H1 (cell line): ENCODE measurements at regions of chr4 and their contacts with region 1.

Region 1: DNA sequence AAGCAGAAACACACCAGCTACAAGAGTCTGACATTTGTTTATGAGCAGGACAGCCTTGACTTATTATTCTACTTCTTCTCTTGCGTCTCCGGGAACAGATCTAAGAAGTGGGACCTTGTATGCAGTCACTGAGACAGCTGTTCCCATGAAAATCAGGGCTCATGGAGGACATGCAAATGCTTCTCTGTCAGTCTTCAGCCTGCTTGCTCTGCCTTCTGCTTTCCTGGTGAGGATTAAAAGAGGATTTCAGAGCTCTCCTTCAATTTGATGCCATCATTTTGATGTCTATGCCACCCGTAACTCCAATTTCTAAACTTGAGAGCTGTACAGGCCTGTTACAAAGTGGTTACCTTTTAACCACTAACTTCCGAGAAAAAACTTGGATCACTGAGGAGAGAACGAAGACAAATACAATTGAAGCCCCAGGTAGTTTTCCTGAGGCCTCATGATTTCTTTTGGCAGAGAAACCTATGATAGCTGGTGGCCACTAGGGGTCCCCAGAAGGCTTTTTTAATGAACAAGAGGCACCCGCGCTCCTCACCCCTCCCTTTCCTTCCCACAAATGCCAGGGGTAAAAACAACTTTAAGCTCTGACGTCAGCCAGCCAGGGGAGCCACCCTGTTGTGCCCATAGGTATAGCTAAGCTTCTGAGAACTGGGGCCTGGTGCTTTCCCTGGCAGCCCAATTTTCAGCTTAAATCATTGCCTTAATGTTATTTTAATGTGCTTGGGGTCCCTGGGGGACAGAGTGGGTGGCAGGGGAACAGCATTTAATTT is 97.0 kb downstream of the DDIT4L start:
- DNase-seq: peak; percentile 80 to 81
- H3K4me3 ChIP-seq: no peak overlapping the region
- H3K27ac ChIP-seq: peak overlapping the region; percentile 60
- H3K4me1 ChIP-seq: peaks cover 5 to 10% (median 6%) of the 10 kb centered on the region in 4 experiments; a peak in 4 of 7 replicates
- H3K27me3 ChIP-seq: no peaks in the 10 kb centered on the region
- CTCF ChIP-seq: peak; percentile 29 to 73 (median 59)
- EP300 ChIP-seq: no peak; a peak in 1 of 3 replicates
- POLR2A ChIP-seq: no peak
- RAD21 ChIP-seq: peak; percentile 79 to 80

Region 2: DNA sequence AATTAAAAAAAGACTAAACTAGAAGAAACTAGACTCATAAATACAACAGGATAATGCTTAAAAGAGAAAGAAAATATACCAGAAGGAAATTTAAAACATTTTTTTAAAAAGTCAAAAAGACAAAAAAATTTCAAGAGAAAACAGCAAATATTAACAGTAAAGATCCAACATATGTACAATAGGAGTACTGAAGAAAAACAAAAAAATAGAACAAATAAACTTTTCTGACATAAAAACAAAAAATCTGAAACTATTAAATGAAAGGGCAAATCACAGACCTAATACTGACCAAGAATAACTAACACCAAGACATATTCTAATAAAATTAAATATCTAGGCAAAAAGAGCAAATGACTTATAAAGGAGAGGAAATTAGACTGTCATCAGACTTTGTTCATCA is 158.4 kb before region 1 on chr4:
- CTCF ChIA-PET with region 1: no interaction called
- POLR2A ChIA-PET with region 1: no interaction called
- DNase-seq: no peak
- H3K4me3 ChIP-seq: no peak overlapping the region
- H3K27ac ChIP-seq: no peak overlapping the region
- H3K4me1 ChIP-seq: no peaks in the 10 kb centered on the region
- H3K27me3 ChIP-seq: no peaks in the 10 kb centered on the region
- CTCF ChIP-seq: no peak
- EP300 ChIP-seq: no peak
- POLR2A ChIP-seq: no peak
- RAD21 ChIP-seq: no peak

Region 3: GRCh38 chr4:99998062-99998867 is 95.0 kb before region 1 on chr4:
- CTCF ChIA-PET with region 1: interaction called, 19 read pairs
- POLR2A ChIA-PET with region 1: no interaction called
- DNase-seq: no peak
- H3K4me3 ChIP-seq: no peak overlapping the region
- H3K27ac ChIP-seq: no peak overlapping the region
- H3K4me1 ChIP-seq: no peaks in the 10 kb centered on the region
- H3K27me3 ChIP-seq: no peaks in the 10 kb centered on the region
- CTCF ChIP-seq: peak in 1 of 3 experiments; percentile 24; a peak in 2 of 4 replicates
- EP300 ChIP-seq: no peak
- POLR2A ChIP-seq: no peak
- RAD21 ChIP-seq: peak; percentile 56 to 60

Region 4: DNA sequence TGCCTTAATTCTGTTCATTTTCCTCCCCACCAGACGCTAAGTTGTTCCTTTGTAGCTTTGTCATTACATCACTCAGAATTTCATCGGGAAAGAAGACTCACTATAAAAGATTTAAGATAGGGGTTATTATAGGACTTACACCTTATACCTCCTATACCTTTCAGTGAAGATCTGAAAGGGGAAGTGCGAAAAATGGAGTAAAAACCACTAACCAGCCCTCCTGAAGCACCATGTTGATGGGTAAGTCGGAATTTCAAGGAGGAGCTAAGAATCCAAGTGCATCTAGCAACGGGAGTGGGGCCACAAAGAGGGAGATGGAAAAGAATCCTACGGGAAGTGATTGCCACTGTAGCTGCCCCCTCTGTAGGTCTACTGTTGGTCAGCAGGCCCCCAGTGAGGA is 24.1 kb before region 1 on chr4:
- CTCF ChIA-PET with region 1: interaction called, 11 read pairs
- POLR2A ChIA-PET with region 1: no interaction called
- DNase-seq: no peak
- H3K4me3 ChIP-seq: no peak overlapping the region
- H3K27ac ChIP-seq: no peak overlapping the region
- H3K4me1 ChIP-seq: no peaks in the 10 kb centered on the region
- H3K27me3 ChIP-seq: no peaks in the 10 kb centered on the region
- CTCF ChIP-seq: no peak
- EP300 ChIP-seq: no peak
- POLR2A ChIP-seq: no peak
- RAD21 ChIP-seq: no peak

Region 5: DNA sequence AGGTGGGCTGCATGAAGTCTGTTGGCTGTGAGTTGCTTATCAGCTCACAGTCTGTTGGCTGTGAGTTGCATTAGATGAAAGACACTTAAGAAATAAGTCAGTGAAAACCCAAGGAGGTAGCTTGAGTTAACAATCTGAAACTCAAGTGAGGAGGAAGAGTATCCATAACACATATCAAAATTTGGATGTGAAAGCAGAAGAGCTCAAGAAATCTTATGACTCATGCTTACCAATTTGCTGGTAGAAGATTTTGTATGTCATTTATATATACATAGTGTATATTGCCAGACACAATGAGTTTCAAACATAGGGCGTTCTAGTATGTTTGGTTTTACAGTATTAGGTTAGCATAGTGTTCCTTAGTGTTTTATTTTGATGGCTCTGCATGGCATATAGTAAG is 10.4 kb before region 1 on chr4:
- CTCF ChIA-PET with region 1: interaction called, 13 read pairs
- POLR2A ChIA-PET with region 1: no interaction called
- DNase-seq: no peak
- H3K4me3 ChIP-seq: no peak overlapping the region
- H3K27ac ChIP-seq: no peak overlapping the region
- H3K4me1 ChIP-seq: peaks cover 0 to 4% (median 2%) of the 10 kb centered on the region in 4 experiments; a peak in 4 of 7 replicates
- H3K27me3 ChIP-seq: no peaks in the 10 kb centered on the region
- CTCF ChIP-seq: no peak
- EP300 ChIP-seq: no peak
- POLR2A ChIP-seq: no peak
- RAD21 ChIP-seq: no peak

Region 6: DNA sequence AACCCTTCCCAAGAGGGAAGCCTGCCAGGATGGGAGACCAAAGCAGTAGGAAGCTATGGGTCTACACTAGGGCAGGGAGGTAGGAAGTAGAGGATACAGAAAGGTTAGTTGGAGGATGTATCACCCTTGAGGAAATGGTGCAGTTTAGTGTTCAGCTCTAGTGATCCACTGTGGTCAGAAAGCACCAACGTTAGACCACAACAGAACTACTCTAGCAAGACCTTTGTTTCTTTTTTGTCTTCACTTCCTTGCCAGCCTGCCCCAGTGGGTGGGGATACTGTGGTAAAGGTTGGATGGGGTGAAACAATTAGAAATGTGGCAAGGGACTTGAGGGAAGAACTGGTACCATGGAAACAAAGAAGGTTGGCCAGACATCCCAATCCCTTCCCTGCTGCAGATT is 13.7 kb after region 1 on chr4:
- CTCF ChIA-PET with region 1: interaction called, 54 read pairs
- POLR2A ChIA-PET with region 1: no interaction called
- DNase-seq: no peak
- H3K4me3 ChIP-seq: no peak overlapping the region
- H3K27ac ChIP-seq: no peak overlapping the region
- H3K4me1 ChIP-seq: no peaks in the 10 kb centered on the region; a peak in 1 of 7 replicates
- H3K27me3 ChIP-seq: no peaks in the 10 kb centered on the region
- CTCF ChIP-seq: no peak
- EP300 ChIP-seq: no peak
- POLR2A ChIP-seq: no peak
- RAD21 ChIP-seq: no peak